ENCODE measurements at regions of chr11 and their contacts with region 1.

Region 1: GRCh38 chr11:128884703-128885338 is 6.3 kb upstream of the KCNJ5 start:
- DNase-seq: peak; percentile 59

Region 2: DNA sequence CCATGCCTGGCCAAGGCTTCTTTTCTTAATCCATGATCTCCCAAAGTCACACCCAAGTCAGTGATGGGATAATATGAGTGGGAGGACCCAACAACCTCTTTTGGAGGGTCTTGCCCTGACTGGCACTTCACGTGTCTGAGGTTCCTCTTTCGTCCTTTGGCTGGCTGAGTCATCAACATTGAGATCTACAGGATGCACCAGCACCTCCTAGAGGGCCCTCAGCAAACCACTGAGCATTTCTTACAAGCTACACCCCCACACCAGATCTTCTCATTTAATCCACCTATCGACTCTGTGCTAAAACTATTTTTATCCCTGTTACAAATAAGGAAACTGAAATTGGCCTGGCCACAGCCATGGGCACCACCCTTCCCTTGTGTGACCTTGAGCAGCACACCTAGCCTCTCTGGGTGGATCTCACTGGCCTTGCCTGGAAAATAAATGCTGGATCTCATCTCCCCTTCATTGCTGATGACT is 127.5 kb before region 1 on chr11:
- in situ Hi-C with region 1: no loop called
- DNase-seq: peak; percentile 91

Region 3: DNA sequence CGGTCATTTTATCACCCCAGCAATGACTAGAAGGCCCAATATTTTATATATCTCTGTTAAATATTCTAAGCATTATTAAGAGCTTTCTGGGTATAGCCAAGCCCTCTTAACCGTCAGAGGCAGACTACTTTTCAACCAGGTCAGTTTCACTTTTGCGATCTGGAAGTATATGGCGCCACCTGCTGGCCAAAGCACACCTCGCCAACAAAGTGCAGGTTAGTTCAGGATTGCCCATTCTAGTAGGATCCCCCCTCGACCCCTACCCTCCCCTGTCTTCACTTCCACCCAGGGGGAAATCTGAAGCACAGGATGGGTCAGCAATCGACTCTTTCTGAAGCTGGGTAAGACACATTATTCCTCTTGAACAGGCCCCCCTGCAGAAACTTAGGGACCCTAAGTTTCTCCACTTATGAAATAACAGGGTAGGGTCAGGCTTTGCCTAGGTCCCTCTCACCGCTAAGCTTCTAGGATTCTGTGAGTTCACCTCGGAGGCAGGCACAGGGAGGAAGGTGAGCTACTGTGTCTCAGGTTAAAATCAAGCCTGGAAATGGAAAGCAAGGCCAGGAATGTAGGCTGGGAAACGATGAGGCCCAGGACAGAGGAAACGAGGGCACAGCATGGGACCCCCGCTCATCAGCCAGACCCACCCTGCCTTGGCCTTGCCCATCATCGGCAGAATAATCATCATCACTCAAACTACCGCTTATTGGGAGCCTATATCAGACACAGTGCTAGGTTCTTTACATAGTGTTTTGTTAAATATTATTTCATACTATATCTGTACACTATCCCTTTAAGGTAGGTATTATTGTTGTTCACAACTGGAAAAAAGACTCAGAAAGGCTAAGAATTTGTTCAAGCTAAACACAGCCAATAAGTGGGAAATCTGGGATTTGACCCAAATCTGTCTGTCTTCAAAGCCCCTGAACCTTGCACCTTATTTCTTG is 53.4 kb before region 1 on chr11:
- in situ Hi-C with region 1: no loop called
- DNase-seq: peak; percentile 90

Region 4: GRCh38 chr11:128956401-128957201 is 71.8 kb after region 1 on chr11:
- in situ Hi-C with region 1: loop called (anchors 10 kb)
- DNase-seq: peak; percentile 64

Region 5: DNA sequence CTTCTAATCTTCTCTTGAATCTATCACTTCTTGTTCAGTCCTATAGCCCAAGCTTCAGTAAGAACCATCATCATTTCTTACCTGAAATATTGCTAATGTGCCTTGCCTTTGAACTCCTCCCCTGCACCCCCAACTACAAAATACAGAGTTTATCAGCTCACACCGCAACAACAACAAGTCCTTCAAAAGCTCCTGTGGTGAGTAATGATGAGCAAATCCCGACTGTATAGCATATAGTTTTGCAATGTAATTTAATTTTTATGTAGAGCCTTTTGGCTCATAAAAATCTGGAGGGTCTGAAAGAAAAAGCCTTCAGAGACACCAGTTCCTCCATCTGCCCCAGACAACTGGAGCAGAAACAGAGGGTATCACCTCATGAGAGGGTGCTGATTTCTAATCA is 182.6 kb after region 1 on chr11:
- in situ Hi-C with region 1: no loop called
- DNase-seq: no peak

Measured in KBM-7 (cell line).